CD4-positive, alpha-beta T cell (primary cell): ENCODE measurements at regions of chr13 and their contacts with region 1.

Region 1: GRCh38 chr13:40682449-40683240 is 16.2 kb upstream of the FOXO1 start:
- DNase-seq: peak in 3 of 14 experiments; percentile 39 to 57 (median 48)
- ATAC-seq: peak; percentile 52
- H3K4me3 ChIP-seq: no peak overlapping the region
- H3K4me3 Mint-ChIP-seq: no peak overlapping the region
- H3K27ac ChIP-seq: no peak overlapping the region
- H3K27ac Mint-ChIP-seq: no peak overlapping the region
- H3K4me1 ChIP-seq: no peaks in the 10 kb centered on the region
- H3K4me1 Mint-ChIP-seq: peaks cover 13% of the 10 kb centered on the region
- H3K27me3 ChIP-seq: no peaks in the 10 kb centered on the region
- H3K27me3 Mint-ChIP-seq: no peaks in the 10 kb centered on the region
- CTCF ChIP-seq: peak; percentile 89

Region 2: DNA sequence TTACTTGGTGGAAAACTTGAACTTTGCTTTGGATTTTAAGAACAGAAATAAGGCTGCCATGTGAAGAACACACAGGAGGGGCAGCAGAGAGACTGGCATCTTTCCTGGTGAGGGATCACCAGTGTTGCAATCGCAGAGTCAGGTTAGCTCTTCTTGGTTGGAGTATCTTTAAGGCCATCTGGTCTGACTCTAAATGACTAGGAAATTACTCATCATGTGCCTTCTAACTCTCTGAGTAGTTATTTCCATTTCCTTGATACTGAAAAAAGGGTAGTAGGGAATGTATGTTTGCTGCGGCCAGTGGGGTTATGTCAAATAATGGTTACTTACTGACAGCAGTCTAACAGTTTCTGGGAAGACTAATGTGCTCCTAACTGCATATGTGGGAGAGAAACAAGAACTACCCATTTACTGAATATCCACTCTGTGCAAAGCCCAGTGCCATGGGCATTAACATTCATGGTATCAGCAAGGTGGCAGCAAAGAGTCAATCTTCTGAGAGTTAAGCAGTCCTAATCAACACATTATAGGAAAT is 905.1 kb before region 1 on chr13:
- CTCF ChIA-PET with region 1: interaction called, 3 read pairs
- POLR2A ChIA-PET with region 1: no interaction called
- intact Hi-C with region 1: loop called (anchors 2 kb)
- DNase-seq: peak in 6 of 14 experiments; percentile 6 to 56 (median 41)
- ATAC-seq: peak; percentile 60
- H3K4me3 ChIP-seq: no peak overlapping the region
- H3K4me3 Mint-ChIP-seq: no peak overlapping the region
- H3K27ac ChIP-seq: no peak overlapping the region
- H3K27ac Mint-ChIP-seq: peak overlapping the region; percentile 58
- H3K4me1 ChIP-seq: peaks cover 18% of the 10 kb centered on the region
- H3K4me1 Mint-ChIP-seq: peaks cover 37% of the 10 kb centered on the region
- H3K27me3 ChIP-seq: no peaks in the 10 kb centered on the region
- H3K27me3 Mint-ChIP-seq: no peaks in the 10 kb centered on the region
- CTCF ChIP-seq: peak; percentile 63

Region 3: DNA sequence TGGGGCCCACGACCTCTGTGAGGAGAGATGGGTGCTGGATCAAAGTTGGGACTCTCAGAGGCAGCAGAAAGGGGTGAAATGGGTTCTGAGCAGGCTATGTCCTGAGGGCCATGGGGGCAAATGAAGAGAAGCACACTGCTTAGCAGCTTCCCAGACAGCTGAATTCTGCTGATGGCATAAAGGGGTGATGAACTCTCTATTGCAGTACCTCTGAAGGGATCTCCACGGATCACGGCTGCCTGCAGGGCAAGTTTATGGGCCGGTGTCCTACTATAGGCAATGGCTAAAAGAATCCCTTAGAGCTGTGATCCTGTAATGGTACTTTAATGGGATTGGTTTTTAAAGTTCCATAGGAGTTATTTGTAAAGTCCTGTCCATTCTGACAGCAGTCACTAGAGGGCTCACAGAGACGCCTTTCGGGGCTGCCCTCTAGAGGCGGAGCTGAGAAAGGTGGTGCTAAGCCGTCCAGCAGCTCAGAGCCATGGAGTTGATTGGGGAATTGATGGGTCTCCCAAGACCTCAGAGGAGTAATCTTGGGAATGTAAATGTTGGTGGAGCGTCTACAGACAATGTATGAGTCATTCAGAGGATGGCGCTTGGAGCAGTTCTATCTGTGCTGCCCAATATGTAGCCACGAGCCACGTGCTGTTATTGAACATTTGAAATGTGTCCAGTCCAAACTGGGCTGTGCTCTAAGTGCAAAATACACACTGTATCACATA is 739.9 kb before region 1 on chr13:
- CTCF ChIA-PET with region 1: interaction called, 22 read pairs
- POLR2A ChIA-PET with region 1: no interaction called
- intact Hi-C with region 1: loop called (anchors 1 kb)
- DNase-seq: peak; percentile 52 to 85 (median 62)
- ATAC-seq: peak; percentile 100
- H3K4me3 ChIP-seq: no peak overlapping the region
- H3K4me3 Mint-ChIP-seq: no peak overlapping the region
- H3K27ac ChIP-seq: no peak overlapping the region
- H3K27ac Mint-ChIP-seq: no peak overlapping the region
- H3K4me1 ChIP-seq: peaks cover 8% of the 10 kb centered on the region
- H3K4me1 Mint-ChIP-seq: peaks cover 10% of the 10 kb centered on the region
- H3K27me3 ChIP-seq: no peaks in the 10 kb centered on the region
- H3K27me3 Mint-ChIP-seq: no peaks in the 10 kb centered on the region
- CTCF ChIP-seq: peak; percentile 100

Region 4: DNA sequence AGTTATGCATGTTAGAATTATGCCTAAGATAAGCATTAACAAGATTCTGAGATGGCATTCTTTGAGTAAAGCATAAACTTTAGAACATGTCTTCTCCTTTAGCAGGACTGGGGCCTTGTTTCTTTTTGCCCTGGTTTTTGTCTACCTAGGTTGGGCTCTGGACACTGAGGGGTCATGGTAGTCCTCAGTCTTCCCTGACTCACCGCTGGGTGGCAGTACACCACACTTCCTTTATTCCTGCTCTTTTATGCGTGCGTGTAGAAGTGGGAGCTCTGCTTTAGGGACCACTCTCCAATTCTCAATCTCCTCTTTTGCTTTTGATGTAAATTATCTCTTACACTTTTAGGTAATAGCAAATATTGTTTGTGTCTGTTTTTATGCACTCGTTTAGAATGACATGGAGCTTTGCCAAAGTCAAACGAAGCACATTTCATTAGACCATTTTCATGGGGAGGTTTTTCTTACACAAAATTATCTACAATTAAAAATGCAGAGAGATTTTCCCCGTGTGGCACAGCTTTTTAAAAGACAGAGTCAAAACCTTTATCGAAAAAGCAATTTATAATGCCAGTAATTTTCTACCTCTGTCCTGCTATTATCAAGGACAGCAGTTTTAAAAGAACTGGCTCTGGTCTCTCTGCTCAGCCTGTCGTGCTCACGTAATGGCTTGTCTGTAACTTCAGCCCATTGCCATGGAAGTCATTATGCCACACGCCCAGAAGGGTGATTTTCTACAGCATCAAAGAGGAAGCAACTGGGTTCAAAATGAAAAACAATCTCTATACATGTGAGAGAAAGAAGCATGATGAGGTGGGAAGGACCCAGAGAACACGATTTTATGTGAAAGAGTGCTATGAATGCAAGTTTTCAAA is 613.2 kb before region 1 on chr13:
- CTCF ChIA-PET with region 1: interaction called, 22 read pairs
- POLR2A ChIA-PET with region 1: interaction called, 3 read pairs
- intact Hi-C with region 1: loop called (anchors 1 kb)
- DNase-seq: peak; percentile 54 to 86 (median 67)
- ATAC-seq: peak; percentile 92
- H3K4me3 ChIP-seq: no peak overlapping the region
- H3K4me3 Mint-ChIP-seq: peak overlapping the region; percentile 46
- H3K27ac ChIP-seq: no peak overlapping the region
- H3K27ac Mint-ChIP-seq: peak overlapping the region; percentile 8
- H3K4me1 ChIP-seq: peaks cover 15% of the 10 kb centered on the region
- H3K4me1 Mint-ChIP-seq: peaks cover 38% of the 10 kb centered on the region
- H3K27me3 ChIP-seq: no peaks in the 10 kb centered on the region
- H3K27me3 Mint-ChIP-seq: no peaks in the 10 kb centered on the region
- CTCF ChIP-seq: peak; percentile 91

Region 5: GRCh38 chr13:41554626-41555386 is 872.2 kb after region 1 on chr13:
- CTCF ChIA-PET with region 1: no interaction called
- POLR2A ChIA-PET with region 1: no interaction called
- intact Hi-C with region 1: no loop called
- DNase-seq: no peak
- ATAC-seq: no peak
- H3K4me3 ChIP-seq: no peak overlapping the region
- H3K4me3 Mint-ChIP-seq: no peak overlapping the region
- H3K27ac ChIP-seq: no peak overlapping the region
- H3K27ac Mint-ChIP-seq: no peak overlapping the region
- H3K4me1 ChIP-seq: peaks cover 6% of the 10 kb centered on the region
- H3K4me1 Mint-ChIP-seq: no peaks in the 10 kb centered on the region
- H3K27me3 ChIP-seq: no peaks in the 10 kb centered on the region
- H3K27me3 Mint-ChIP-seq: no peaks in the 10 kb centered on the region
- CTCF ChIP-seq: no peak